ENCODE measurements at regions of chr6 and their contacts with region 1.

Region 1: DNA sequence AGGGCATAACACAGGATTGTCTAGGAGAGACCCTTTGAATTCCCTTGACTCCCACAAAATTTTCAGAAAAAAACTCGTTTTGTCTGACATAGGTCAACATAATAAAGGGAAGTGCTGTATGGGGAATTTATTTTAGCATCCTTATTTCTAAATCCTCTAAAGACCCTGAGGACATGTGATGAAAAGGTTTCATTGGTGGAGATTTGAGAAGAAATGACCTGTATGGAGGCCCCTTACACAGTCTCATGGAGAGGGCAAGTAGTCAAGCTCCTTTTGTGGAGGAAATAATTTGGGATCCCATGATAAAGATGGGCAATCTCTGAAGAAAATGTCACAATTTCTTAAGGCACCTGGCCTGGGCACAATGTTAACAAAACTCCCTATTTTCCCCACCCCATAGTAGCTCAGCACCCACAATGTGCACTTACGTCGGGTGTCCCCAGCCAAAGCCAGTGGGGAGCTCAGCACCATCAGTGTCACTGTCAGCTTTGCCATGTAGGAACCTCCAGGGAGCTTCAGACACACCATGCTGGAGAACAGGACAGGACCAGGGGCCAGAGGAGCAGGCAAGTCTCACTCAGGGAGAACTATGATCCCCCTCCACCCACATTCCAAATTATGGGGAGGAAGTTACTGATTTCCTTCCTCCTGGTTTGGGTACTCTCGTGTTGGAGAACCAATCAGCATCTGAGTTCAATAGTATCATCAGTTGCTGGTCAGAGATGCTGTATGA is at the start of gene HLA-DRB5:
- DNase-seq: no peak
- total RNA-seq, gene HLA-DRB5: not detected in 2 replicates

Region 2: GRCh38 chr6:32589598-32590449 is 60.0 kb after region 1 on chr6 and contains the start of gene HLA-DRB1:
- in situ Hi-C with region 1: loop called (anchors 10 kb)
- DNase-seq: peak; percentile 26
- total RNA-seq, gene HLA-DRB1: 0.17 TPM in 1 of 2 replicates, not detected in the other

Region 3: DNA sequence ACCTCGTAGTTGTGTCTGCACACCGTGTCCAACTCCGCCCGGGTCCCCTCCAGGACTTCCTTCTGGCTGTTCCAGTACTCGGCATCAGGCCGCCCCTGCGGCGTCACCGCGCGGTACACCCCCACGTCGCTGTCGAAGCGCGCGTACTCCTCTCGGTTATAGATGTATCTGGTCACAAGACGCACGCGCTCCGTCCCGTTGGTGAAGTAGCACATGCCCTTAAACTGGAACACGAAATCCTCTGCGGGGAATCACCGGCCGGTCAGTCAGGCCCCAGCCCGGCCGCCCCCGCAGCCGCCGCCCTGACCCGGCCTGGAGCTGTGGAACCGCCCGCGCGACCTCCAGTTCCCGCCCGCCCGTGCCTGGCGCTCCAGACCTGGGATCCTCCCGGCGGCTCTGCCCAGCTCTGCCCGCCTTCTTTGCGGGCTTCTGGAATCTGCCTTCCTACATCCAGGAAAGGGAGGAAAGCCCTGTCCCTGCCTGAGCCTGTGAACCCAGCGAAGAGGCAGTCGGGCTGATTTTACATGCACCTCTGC is 135.0 kb after region 1 on chr6:
- in situ Hi-C with region 1: no loop called
- DNase-seq: no peak

Measured in Caki2 (cell line).